ENCODE measurements at regions of chr4 and their contacts with region 1.

Region 1: DNA sequence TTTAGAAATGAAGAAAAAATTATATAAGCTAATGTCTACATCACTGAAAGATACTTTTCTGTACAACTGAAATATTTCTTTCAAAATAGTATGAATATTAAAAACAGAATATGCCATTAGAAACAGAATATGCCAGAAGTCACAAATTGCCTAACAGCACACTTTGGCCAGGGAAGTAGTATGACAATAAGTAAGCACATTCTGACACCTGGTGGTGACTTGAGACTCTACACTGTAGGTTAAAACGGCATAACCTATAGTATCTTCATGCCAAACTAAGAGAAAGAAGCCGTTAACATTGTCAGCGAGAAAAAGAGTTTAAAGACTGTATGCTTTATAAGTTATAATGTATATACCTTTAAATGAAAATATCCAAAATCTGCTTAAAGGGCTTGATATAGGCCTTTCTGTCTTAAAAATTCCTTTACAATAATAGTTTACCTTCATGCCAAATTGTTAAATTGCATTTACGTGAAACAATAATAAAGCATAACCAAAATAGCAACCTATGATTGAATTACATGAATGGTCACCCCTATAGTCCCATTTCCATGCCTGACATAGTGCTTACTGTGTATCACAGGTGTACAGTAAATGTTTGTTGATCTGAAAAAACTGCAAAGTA is 32.8 kb downstream of the FAM13A start:
- DNase-seq: peak; percentile 60
- H3K4me3 ChIP-seq: no peak overlapping the region
- H3K27ac ChIP-seq: no peak overlapping the region
- H3K4me1 ChIP-seq: no peaks in the 10 kb centered on the region
- H3K27me3 ChIP-seq: no peaks in the 10 kb centered on the region
- CTCF ChIP-seq: peak; percentile 74

Region 2: DNA sequence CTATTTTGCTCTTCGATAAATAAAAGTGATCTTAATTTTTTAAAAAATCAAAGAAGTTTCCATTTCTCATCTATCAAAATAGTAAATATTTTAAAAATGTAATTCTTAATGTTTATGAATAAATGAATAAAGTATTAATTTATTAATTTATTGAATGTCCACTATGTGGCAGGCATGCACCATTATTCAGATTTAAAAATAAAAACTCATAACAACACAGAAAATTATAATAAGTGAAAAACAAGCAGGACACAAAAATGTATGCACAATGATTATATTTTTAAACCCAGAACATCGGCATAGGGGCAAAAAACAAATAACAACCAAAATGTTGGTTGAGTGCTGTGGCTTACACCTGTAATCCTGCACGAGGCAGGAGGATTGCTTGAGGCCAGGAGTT is 495.3 kb before region 1 on chr4:
- CTCF ChIA-PET with region 1: no interaction called
- dilution Hi-C with region 1: no loop called
- in situ Hi-C with region 1: loop called in 1 of 2 experiments (anchors 25 kb)
- intact Hi-C with region 1: loop called (anchors 2 kb)
- DNase-seq: no peak
- H3K4me3 ChIP-seq: no peak overlapping the region
- H3K27ac ChIP-seq: no peak overlapping the region
- H3K4me1 ChIP-seq: peaks cover 27% of the 10 kb centered on the region
- H3K27me3 ChIP-seq: no peaks in the 10 kb centered on the region
- CTCF ChIP-seq: peak in 1 of 2 donors; percentile 9

Region 3: DNA sequence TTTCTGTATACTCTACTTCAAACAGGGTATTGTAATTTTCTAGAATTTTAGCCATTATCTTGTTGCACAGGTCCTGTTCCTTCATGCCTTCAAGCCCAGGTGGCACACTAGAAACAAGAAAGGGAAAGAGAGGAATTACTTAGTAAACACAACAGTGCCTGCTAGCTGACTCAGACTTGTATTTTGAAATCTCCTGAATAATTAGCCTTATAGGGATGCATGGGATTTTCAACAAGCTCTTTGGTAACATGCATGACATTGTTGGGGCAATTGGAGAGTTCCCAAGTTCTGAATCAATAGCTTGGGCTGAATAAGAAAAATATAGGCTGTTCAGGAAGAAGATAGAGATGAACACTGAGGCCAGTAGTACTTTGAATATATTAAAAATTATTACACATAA is 86.0 kb before region 1 on chr4:
- CTCF ChIA-PET with region 1: interaction called, 4 read pairs
- dilution Hi-C with region 1: no loop called
- in situ Hi-C with region 1: no loop called
- intact Hi-C with region 1: loop called (anchors 2 kb)
- DNase-seq: peak; percentile 93
- H3K4me3 ChIP-seq: no peak overlapping the region
- H3K27ac ChIP-seq: peak overlapping the region; percentile 37
- H3K4me1 ChIP-seq: peaks cover 6% of the 10 kb centered on the region
- H3K27me3 ChIP-seq: no peaks in the 10 kb centered on the region
- CTCF ChIP-seq: peak in 1 of 2 donors; percentile 36

Region 4: DNA sequence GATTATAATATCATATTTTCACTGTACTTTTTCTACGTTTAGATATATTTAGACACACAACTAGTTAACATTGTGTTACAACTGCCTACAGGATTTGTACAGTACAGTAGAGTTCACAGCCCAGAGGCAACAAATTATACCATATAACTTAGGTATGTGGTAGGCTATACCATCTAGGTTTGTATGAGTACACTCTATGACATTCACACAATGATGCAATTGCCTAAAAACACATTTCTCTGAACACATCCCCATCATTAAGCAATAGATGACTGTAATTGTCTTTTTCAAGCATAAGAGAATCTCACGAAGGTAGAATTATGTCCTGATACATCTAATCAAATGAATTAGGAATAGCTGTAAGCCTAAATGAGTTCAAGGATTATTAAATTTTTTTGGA is 74.9 kb after region 1 on chr4:
- CTCF ChIA-PET with region 1: no interaction called
- dilution Hi-C with region 1: no loop called
- in situ Hi-C with region 1: no loop called
- intact Hi-C with region 1: no loop called
- DNase-seq: no peak
- H3K4me3 ChIP-seq: no peak overlapping the region
- H3K27ac ChIP-seq: no peak overlapping the region
- H3K4me1 ChIP-seq: no peaks in the 10 kb centered on the region
- H3K27me3 ChIP-seq: no peaks in the 10 kb centered on the region
- CTCF ChIP-seq: no peak

Region 5: GRCh38 chr4:89134775-89135319 is 110.7 kb after region 1 on chr4:
- CTCF ChIA-PET with region 1: no interaction called
- dilution Hi-C with region 1: no loop called
- in situ Hi-C with region 1: no loop called
- intact Hi-C with region 1: no loop called
- DNase-seq: peak; percentile 71
- H3K4me3 ChIP-seq: no peak overlapping the region
- H3K27ac ChIP-seq: no peak overlapping the region
- H3K4me1 ChIP-seq: peaks cover 5% of the 10 kb centered on the region
- H3K27me3 ChIP-seq: no peaks in the 10 kb centered on the region
- CTCF ChIP-seq: no peak